HepG2 (cell line): ENCODE measurements at regions of chr13 and their contacts with region 1.

Region 1: DNA sequence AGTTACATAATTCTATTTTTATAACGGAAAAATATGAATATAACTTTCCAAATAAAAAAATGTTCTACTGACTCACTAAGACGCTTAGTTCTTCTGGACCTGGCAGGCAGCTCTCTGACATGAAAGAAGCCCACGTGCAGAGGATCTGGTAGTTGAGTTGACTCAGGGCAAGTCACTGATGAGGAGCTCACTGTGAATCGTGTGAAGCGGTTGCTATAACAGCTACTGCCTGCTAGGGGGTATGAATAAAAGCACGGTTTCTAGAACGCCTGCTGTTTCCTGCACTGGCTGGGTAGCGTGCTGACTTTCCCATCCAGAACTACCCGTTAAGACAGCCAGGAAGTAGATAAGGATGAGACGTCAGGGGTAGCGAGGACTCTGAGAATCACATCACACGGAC is 54.7 kb upstream of the WASF3 start:
- DNase-seq: no peak
- ATAC-seq: peak; percentile 50; the same call in 2 of the 3 replicates
- H3K4me3 ChIP-seq: no peak overlapping the region
- H3K27ac ChIP-seq: no peak overlapping the region
- H3K4me1 ChIP-seq: no peaks in the 10 kb centered on the region
- H3K27me3 ChIP-seq: peaks cover 4 to 20% of the 10 kb centered on the region in 2 experiments; a peak in 3 of 5 replicates
- CTCF ChIP-seq: no peak
- EP300 ChIP-seq: no peak
- POLR2A ChIP-seq: no peak
- RAD21 ChIP-seq: no peak

Region 2: GRCh38 chr13:26299168-26299750 is 203.6 kb before region 1 on chr13:
- CTCF ChIA-PET with region 1: no interaction called
- POLR2A ChIA-PET with region 1: no interaction called
- in situ Hi-C with region 1: no loop called
- intact Hi-C with region 1: no loop called
- DNase-seq: no peak
- ATAC-seq: no peak
- H3K4me3 ChIP-seq: no peak overlapping the region
- H3K27ac ChIP-seq: no peak overlapping the region
- H3K4me1 ChIP-seq: no peaks in the 10 kb centered on the region
- H3K27me3 ChIP-seq: no peaks in the 10 kb centered on the region
- CTCF ChIP-seq: no peak
- EP300 ChIP-seq: no peak
- POLR2A ChIP-seq: no peak
- RAD21 ChIP-seq: no peak

Region 3: GRCh38 chr13:26377038-26377437 is 125.8 kb before region 1 on chr13:
- CTCF ChIA-PET with region 1: no interaction called
- POLR2A ChIA-PET with region 1: no interaction called
- in situ Hi-C with region 1: no loop called
- intact Hi-C with region 1: loop called (anchors 10 kb)
- DNase-seq: peak; percentile 28
- ATAC-seq: peak; percentile 90
- H3K4me3 ChIP-seq: no peak overlapping the region
- H3K27ac ChIP-seq: no peak overlapping the region
- H3K4me1 ChIP-seq: no peaks in the 10 kb centered on the region
- H3K27me3 ChIP-seq: no peaks in the 10 kb centered on the region
- CTCF ChIP-seq: peak; percentile 32; the same call in 1 of the 2 replicates
- EP300 ChIP-seq: no peak
- POLR2A ChIP-seq: no peak
- RAD21 ChIP-seq: peak; percentile 30; the same call in 1 of the 2 replicates

Region 4: GRCh38 chr13:26482451-26483197 is 20.2 kb before region 1 on chr13:
- CTCF ChIA-PET with region 1: no interaction called
- POLR2A ChIA-PET with region 1: no interaction called
- in situ Hi-C with region 1: no loop called
- intact Hi-C with region 1: no loop called
- DNase-seq: peak; percentile 61
- ATAC-seq: peak; percentile 59
- H3K4me3 ChIP-seq: no peak overlapping the region
- H3K27ac ChIP-seq: no peak overlapping the region
- H3K4me1 ChIP-seq: no peaks in the 10 kb centered on the region
- H3K27me3 ChIP-seq: peaks cover 2 to 17% of the 10 kb centered on the region in 2 experiments; a peak in 3 of 5 replicates
- CTCF ChIP-seq: peak; percentile 72
- EP300 ChIP-seq: no peak
- POLR2A ChIP-seq: no peak
- RAD21 ChIP-seq: peak; percentile 39; the same call in 1 of the 2 replicates

Region 5: GRCh38 chr13:26529441-26529840 is 26.6 kb after region 1 on chr13:
- CTCF ChIA-PET with region 1: no interaction called
- POLR2A ChIA-PET with region 1: no interaction called
- in situ Hi-C with region 1: no loop called
- intact Hi-C with region 1: loop called (anchors 1 kb)
- DNase-seq: peak; percentile 15
- ATAC-seq: no peak
- H3K4me3 ChIP-seq: no peak overlapping the region
- H3K27ac ChIP-seq: no peak overlapping the region
- H3K4me1 ChIP-seq: no peaks in the 10 kb centered on the region
- H3K27me3 ChIP-seq: no peaks in the 10 kb centered on the region
- CTCF ChIP-seq: no peak
- EP300 ChIP-seq: no peak
- POLR2A ChIP-seq: no peak
- RAD21 ChIP-seq: no peak

Region 6: DNA sequence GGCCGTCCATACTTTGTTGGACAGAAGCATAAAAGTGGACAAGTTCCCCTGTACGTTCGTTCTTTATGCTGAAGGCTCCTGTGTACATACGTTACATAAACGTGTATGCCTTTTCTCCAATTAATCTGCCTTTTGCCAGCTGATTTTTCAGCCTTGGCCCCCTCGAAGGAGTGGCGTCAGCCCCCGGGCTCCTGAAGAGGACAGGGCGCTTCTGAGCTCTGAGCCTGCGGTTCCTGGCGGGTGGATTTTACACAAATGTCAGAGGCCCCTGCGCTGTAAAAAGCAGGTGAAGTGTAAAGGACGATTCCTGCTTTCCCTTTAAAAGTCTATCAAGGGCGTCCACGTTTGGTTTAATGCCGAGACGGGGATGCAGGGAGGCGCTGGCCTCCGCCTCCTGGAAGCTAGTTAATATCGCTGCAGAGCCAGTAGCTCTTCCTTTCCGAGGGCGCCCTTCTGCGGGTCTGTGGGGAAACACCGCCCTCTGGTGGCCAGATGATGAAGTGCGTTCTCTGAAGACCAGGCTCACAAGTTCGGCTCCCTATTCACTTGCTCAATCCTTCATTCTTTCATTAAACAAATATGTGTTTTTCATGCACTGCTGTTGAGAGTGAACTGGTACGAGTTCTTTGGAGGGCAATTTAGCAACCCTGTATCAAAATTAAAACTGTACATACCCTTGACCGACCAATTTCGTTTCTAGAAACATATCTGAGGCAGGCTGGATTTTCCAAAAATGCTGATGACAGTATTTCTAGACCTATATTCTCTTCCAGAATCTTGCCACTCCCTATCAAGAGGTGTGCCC is 195.8 kb after region 1 on chr13:
- CTCF ChIA-PET with region 1: no interaction called
- POLR2A ChIA-PET with region 1: no interaction called
- in situ Hi-C with region 1: no loop called
- intact Hi-C with region 1: loop called (anchors 5 kb)
- DNase-seq: peak; percentile 66
- ATAC-seq: peak; percentile 81
- H3K4me3 ChIP-seq: peak overlapping the region; percentile 27 to 55 (median 27); a peak in 5 of 6 replicates
- H3K27ac ChIP-seq: no peak overlapping the region
- H3K4me1 ChIP-seq: no peaks in the 10 kb centered on the region
- H3K27me3 ChIP-seq: peaks cover 5 to 24% of the 10 kb centered on the region in 2 experiments; a peak in 4 of 5 replicates
- CTCF ChIP-seq: peak; percentile 92
- EP300 ChIP-seq: no peak
- POLR2A ChIP-seq: no peak
- RAD21 ChIP-seq: peak; percentile 89